ENCODE measurements at regions of chr9 and their contacts with region 1.

Region 1: DNA sequence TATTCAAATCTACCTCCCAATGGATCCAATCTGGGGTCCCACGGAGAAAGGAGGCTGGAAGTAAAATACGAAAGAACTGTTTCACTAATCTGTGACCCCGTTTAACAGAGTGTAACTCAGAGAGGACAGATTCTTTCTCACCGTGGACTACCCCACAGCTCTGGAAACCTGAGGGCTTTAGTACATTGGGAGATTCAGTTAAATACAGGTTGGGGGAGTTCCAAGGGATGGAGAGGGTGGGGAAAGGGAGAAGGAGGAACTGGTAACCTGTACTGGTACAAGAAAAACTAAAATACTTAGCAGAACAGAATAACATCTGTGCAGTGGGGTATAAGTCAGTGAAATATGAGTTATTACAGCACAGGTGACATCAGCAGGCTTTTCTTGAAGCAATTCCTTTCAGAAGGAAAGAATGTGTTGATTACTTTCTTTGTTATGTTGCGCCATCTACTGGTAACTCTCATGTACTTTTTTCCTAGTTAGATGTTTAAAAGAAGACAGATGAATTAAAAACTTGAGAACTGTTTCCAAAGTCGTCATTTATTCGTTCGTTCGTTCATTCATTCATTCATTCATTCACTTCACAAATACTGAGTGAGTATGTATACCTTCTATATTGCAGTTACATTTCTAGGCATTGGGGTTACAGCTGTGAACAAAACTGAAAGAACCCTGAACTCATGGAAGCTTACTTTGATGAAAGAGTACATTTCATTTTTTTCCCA is 30.0 kb upstream of the STOM start:
- DNase-seq: no peak
- ATAC-seq: peak; percentile 69 to 93 (median 88)
- H3K4me3 ChIP-seq: no peak overlapping the region
- H3K27ac ChIP-seq: no peak overlapping the region
- H3K4me1 ChIP-seq: no peaks in the 10 kb centered on the region
- H3K27me3 ChIP-seq: no peaks in the 10 kb centered on the region
- CTCF ChIP-seq: peak; percentile 39 to 68 (median 58)

Region 2: DNA sequence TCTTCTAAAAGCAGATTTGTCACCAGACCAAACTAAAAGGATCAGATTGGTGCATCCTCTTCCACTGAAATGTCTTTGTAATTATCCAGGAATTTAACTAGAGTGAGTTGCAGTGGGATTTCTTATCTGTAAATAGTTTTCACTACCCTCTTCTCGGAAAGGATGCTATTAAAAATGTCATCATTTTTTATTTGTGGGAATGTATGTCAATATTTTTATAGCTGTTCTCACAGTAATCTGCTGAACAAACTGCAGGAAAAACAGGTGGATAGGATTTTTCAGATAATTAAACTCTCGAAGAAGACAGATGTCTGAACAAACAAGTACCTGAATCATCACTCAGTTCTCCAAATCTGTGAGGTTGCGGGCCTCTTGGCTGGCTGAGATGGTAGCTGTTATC is 261.1 kb before region 1 on chr9:
- intact Hi-C with region 1: no loop called
- DNase-seq: no peak
- ATAC-seq: no peak
- H3K4me3 ChIP-seq: no peak overlapping the region
- H3K27ac ChIP-seq: no peak overlapping the region
- H3K4me1 ChIP-seq: no peaks in the 10 kb centered on the region
- H3K27me3 ChIP-seq: no peaks in the 10 kb centered on the region
- CTCF ChIP-seq: no peak

Region 3: GRCh38 chr9:121213136-121213806 is 186.8 kb before region 1 on chr9:
- intact Hi-C with region 1: loop called in 2 of 3 experiments (anchors 10 kb)
- DNase-seq: peak; percentile 80 to 95 (median 92)
- ATAC-seq: peak; percentile 98 to 100 (median 100)
- H3K4me3 ChIP-seq: no peak overlapping the region
- H3K27ac ChIP-seq: peak overlapping the region in 1 of 4 donors; percentile 55
- H3K4me1 ChIP-seq: no peaks in the 10 kb centered on the region
- H3K27me3 ChIP-seq: no peaks in the 10 kb centered on the region
- CTCF ChIP-seq: peak; percentile 83 to 94 (median 86)

Region 4: DNA sequence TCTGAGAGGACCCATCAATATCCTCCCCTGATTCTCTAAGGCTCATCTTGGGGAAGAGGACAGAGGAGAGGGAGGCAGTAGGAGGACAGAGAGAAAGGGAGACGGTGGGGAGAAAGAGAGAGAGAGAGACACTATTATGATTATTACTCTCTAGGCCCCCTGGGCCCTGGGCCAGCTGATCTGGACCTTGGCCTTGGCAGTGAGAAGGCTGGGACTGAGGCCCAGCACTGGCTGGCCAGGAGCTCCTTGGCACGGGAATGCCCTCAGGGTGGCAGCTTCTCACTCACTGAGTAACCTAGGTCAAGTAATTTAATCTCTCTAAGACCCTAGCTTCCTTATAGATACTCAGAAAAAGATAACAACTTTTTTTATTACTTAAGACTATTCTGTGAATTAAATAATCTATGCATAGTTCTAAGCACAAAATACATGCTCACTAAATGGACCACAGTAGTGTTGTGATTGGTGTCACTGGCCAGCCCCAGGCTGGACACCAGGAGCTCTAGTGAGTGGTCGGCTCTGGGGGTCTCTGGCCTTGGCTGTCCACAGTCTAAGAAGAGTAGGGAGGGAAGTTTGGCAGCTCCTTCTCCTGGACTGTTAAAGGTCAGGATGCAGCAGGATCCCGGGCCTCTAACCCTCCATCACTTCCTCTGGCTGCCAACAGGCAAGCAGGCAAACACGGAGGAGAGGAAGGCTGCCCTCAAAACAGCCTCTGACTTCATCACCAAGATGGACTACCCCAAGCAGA is 82.1 kb before region 1 on chr9:
- intact Hi-C with region 1: loop called in 2 of 3 experiments (anchors 5 kb)
- DNase-seq: peak; percentile 74 to 87 (median 76)
- ATAC-seq: peak; percentile 50 to 78 (median 62)
- H3K4me3 ChIP-seq: no peak overlapping the region
- H3K27ac ChIP-seq: peak overlapping the region in 1 of 4 donors; percentile 15
- H3K4me1 ChIP-seq: peaks cover 0 to 6% (median 5%) of the 10 kb centered on the region in 3 donors
- H3K27me3 ChIP-seq: no peaks in the 10 kb centered on the region
- CTCF ChIP-seq: no peak

Measured in pancreas (tissue), 10 donors.